Posterior vena cava (tissue), 2 donors: ENCODE measurements at regions of chr3 and their contacts with region 1.

Region 1: DNA sequence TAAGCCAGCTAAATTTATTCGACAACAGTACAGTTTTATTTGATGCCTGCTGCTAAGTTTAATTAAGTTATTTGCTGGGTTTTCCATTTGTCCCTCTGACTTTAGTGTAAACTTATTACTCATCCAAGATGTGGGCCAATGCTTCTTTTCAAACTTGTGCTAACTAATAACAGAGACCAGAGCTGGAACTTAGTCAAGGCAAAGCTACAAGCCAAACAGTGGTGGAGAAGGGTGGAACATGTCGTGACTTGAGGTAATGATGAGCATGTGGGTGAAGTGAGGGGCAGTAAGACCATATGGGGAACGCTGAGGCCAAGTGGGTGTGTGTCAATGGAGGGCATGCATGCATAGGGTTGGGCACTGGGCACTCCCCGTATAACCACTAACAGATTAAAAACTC is 63.9 kb downstream of the NMD3 start:
- DNase-seq: no peak

Region 2: GRCh38 chr3:161423911-161424522 is 139.0 kb after region 1 on chr3:
- intact Hi-C with region 1: loop called in 1 of 2 experiments (anchors 5 kb)
- DNase-seq: no peak

Region 3: DNA sequence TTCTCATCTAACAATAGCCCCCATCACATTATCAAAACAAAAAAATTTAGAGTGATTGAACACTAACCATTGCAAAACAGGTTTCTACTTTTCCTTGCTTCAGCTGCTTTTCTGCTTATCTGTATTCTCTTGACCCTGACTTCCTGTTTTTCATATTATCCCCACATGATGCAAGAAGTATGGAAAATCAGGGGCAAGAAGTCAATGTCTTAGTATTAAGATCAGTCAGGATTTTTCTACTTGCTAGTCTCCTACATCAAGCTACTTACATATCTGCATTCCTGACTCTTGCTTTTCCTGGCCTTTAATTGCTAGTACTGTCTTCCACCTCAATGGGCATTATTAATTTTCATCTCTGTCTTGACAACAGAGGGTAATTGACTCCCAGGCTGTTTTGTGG is 511.8 kb after region 1 on chr3:
- intact Hi-C with region 1: loop called in 1 of 2 experiments (anchors 10 kb)
- DNase-seq: no peak